Ovary (tissue), 10 donors: ENCODE measurements at regions of chrX and their contacts with region 1.

Region 1: DNA sequence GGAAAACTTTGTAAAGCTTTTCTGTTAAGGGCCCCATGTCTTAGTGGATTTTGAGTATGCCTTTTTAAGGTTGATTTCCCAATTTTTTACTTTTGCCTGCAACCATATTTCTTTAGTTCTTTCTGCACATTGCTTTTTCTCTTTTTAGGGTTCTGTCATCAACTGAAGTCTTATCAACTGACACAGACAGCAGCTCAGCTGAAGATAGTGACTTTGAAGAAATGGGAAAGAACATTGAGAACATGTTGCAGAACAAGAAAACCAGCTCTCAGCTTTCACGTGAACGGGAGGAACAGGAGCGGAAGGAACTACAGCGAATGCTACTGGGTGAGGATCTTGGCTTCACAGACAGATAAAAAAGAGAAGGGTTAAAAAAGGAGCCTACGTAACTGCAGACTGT is 27.8 kb downstream of the TAF1 start:
- DNase-seq: no peak
- H3K4me3 ChIP-seq: no peak overlapping the region
- H3K27ac ChIP-seq: no peak overlapping the region
- H3K4me1 ChIP-seq: no peaks in the 10 kb centered on the region
- H3K27me3 ChIP-seq: no peaks in the 10 kb centered on the region
- CTCF ChIP-seq: no peak
- EP300 ChIP-seq: no peak
- POLR2A ChIP-seq: no peak

Region 2: GRCh38 chrX:71239781-71240180 is 154.1 kb before region 1 on chrX:
- intact Hi-C with region 1: no loop called
- DNase-seq: no peak
- H3K4me3 ChIP-seq: no peak overlapping the region
- H3K27ac ChIP-seq: no peak overlapping the region
- H3K4me1 ChIP-seq: no peaks in the 10 kb centered on the region
- H3K27me3 ChIP-seq: no peaks in the 10 kb centered on the region
- CTCF ChIP-seq: no peak
- EP300 ChIP-seq: no peak
- POLR2A ChIP-seq: no peak

Region 3: DNA sequence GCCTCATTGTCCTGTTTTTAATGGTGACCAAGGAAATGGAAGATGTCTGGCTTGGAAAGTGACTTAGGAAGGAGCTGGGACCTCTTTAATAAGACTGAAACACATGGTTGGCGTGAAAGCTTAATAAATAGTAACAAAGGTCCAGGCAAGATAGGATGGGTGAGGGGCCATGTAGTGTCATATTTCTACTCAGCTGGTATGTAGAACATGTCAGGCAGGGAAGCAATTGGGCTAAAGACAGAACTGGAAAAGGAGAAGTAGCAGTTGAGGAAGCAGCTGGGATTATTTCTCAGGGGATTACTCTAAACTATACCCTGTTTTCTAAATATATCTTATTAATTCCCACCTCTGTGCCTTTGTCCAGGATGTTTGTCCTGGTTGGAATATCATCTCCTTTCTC is 73.8 kb before region 1 on chrX:
- intact Hi-C with region 1: no loop called
- DNase-seq: no peak
- H3K4me3 ChIP-seq: no peak overlapping the region
- H3K27ac ChIP-seq: no peak overlapping the region
- H3K4me1 ChIP-seq: no peaks in the 10 kb centered on the region
- H3K27me3 ChIP-seq: no peaks in the 10 kb centered on the region
- CTCF ChIP-seq: no peak
- EP300 ChIP-seq: no peak
- POLR2A ChIP-seq: no peak

Region 4: GRCh38 chrX:71579136-71579989 is 185.4 kb after region 1 on chrX:
- intact Hi-C with region 1: loop called in 1 of 4 experiments (anchors 10 kb)
- DNase-seq: no peak
- H3K4me3 ChIP-seq: no peak overlapping the region
- H3K27ac ChIP-seq: no peak overlapping the region
- H3K4me1 ChIP-seq: no peaks in the 10 kb centered on the region
- H3K27me3 ChIP-seq: no peaks in the 10 kb centered on the region
- CTCF ChIP-seq: no peak
- EP300 ChIP-seq: no peak
- POLR2A ChIP-seq: no peak

Region 5: GRCh38 chrX:71917621-71918343 is 523.9 kb after region 1 on chrX:
- intact Hi-C with region 1: no loop called
- DNase-seq: peak in 2 of 5 donors; percentile 22 to 28
- H3K4me3 ChIP-seq: no peak overlapping the region
- H3K27ac ChIP-seq: no peak overlapping the region
- H3K4me1 ChIP-seq: no peaks in the 10 kb centered on the region
- H3K27me3 ChIP-seq: no peaks in the 10 kb centered on the region
- CTCF ChIP-seq: no peak
- EP300 ChIP-seq: no peak
- POLR2A ChIP-seq: no peak